T-cell (primary cell): ENCODE measurements at regions of chr18 and their contacts with region 1.

Region 1: GRCh38 chr18:42053188-42053781 is 98.3 kb downstream of the PIK3C3 start:
- DNase-seq: peak in 33 of 35 experiments; percentile 10 to 76 (median 41)
- ATAC-seq: peak; percentile 57 to 73 (median 66)
- H3K4me3 ChIP-seq: no peak overlapping the region
- H3K4me3 Mint-ChIP-seq: no peak overlapping the region
- H3K27ac ChIP-seq: no peak overlapping the region
- H3K27ac Mint-ChIP-seq: peak overlapping the region in 1 of 2 donors; percentile 52
- H3K4me1 ChIP-seq: no peaks in the 10 kb centered on the region
- H3K4me1 Mint-ChIP-seq: peaks cover 14 to 15% (median 15%) of the 10 kb centered on the region in 3 donors
- H3K27me3 ChIP-seq: no peaks in the 10 kb centered on the region
- H3K27me3 Mint-ChIP-seq: no peaks in the 10 kb centered on the region

Region 2: GRCh38 chr18:42028247-42028832 is 24.9 kb before region 1 on chr18:
- CTCF ChIA-PET with region 1: interaction called, 12 to 27 read pairs
- POLR2A ChIA-PET with region 1: no interaction called
- DNase-seq: peak in 23 of 35 experiments; percentile 1 to 50 (median 11)
- ATAC-seq: peak; percentile 48 to 60 (median 51)
- H3K4me3 ChIP-seq: no peak overlapping the region
- H3K4me3 Mint-ChIP-seq: no peak overlapping the region
- H3K27ac ChIP-seq: no peak overlapping the region
- H3K27ac Mint-ChIP-seq: no peak overlapping the region
- H3K4me1 ChIP-seq: no peaks in the 10 kb centered on the region
- H3K4me1 Mint-ChIP-seq: peaks cover 10 to 31% (median 23%) of the 10 kb centered on the region in 3 donors
- H3K27me3 ChIP-seq: no peaks in the 10 kb centered on the region
- H3K27me3 Mint-ChIP-seq: no peaks in the 10 kb centered on the region

Region 3: DNA sequence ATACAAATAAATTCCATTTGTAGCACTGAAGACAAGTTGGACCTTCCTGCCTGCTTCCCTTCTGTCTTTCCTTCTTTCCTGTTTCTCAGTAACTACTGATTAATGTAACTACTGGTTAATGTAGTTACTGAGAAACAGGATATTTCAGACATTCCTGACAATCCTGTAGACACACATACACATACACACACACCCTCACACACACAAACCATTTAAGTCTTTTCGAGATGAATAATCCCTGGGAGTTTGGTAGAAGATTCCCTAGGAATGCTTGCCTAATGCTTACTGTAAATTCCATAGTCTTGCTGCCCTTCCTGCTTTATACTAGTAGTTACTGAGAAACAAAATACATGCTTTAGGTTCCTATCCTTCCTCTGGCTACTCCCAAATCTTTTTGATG is 14.3 kb before region 1 on chr18:
- CTCF ChIA-PET with region 1: interaction called, 4 to 12 read pairs
- POLR2A ChIA-PET with region 1: no interaction called
- DNase-seq: no peak
- ATAC-seq: no peak
- H3K4me3 ChIP-seq: no peak overlapping the region
- H3K4me3 Mint-ChIP-seq: no peak overlapping the region
- H3K27ac ChIP-seq: no peak overlapping the region
- H3K27ac Mint-ChIP-seq: no peak overlapping the region
- H3K4me1 ChIP-seq: no peaks in the 10 kb centered on the region
- H3K4me1 Mint-ChIP-seq: peaks cover 0 to 5% (median 0%) of the 10 kb centered on the region in 3 donors
- H3K27me3 ChIP-seq: no peaks in the 10 kb centered on the region
- H3K27me3 Mint-ChIP-seq: no peaks in the 10 kb centered on the region

Region 4: DNA sequence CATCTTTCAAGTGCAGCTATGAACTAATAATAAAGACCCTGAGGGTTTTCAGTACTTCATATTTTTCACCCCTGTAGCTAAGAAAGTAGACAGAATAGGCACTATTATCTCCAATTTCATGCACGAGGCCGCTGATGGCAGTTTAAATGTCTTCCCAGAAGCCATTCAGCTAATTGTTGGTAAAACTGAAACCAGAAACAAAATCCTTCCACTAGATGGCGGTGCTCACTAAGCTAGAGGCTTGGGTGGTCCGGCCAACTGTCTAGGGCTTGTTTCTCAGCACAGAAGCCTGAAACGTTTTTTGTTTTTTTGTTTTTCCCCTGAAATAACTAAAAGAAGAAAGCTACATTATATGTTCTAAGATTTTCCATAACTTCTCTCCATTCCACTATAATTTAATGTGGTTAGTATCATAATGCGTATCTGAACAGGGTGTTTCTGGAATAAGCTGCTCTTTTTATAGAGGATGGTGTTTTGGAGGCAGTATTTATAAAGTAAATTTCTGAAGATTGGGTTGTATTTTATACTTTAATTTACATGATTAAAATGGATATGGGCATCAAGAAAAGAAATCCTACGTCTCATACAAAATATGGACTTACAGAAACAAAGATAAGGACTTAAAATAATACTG is 61.1 kb after region 1 on chr18:
- CTCF ChIA-PET with region 1: interaction called in 1 of 2 experiments, 21 read pairs
- POLR2A ChIA-PET with region 1: no interaction called
- DNase-seq: peak in 34 of 35 experiments; percentile 5 to 70 (median 26)
- ATAC-seq: peak in 3 of 4 experiments; percentile 60 to 73 (median 68)
- H3K4me3 ChIP-seq: no peak overlapping the region
- H3K4me3 Mint-ChIP-seq: no peak overlapping the region
- H3K27ac ChIP-seq: no peak overlapping the region
- H3K27ac Mint-ChIP-seq: peak overlapping the region in 1 of 2 donors; percentile 69
- H3K4me1 ChIP-seq: peaks cover 0 to 3% of the 10 kb centered on the region in 2 experiments
- H3K4me1 Mint-ChIP-seq: peaks cover 12 to 13% (median 12%) of the 10 kb centered on the region in 3 donors
- H3K27me3 ChIP-seq: peaks cover 0 to 2% of the 10 kb centered on the region in 2 experiments
- H3K27me3 Mint-ChIP-seq: peaks cover 0 to 4% of the 10 kb centered on the region in 2 donors

Region 5: DNA sequence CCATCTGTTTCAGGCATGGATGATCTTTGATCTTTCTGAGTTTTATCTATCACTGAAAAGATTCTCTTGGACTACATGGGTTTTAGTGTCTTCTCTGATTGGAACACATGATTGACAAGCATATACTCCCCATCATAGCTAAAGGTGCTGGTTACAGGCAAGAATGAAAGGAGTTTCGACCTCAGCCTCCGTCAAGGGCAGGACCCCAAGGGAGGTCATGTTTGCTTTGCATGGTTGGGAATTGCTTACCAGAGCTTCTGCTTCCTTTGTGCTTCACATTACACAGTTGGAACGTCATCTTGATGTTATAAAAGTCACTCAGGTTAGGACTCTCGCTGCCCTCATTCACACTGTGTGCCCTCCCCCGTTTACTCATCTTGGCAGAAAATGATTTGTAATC is 189.5 kb after region 1 on chr18:
- CTCF ChIA-PET with region 1: no interaction called
- POLR2A ChIA-PET with region 1: no interaction called
- DNase-seq: no peak
- ATAC-seq: no peak
- H3K4me3 ChIP-seq: no peak overlapping the region
- H3K4me3 Mint-ChIP-seq: no peak overlapping the region
- H3K27ac ChIP-seq: no peak overlapping the region
- H3K27ac Mint-ChIP-seq: no peak overlapping the region
- H3K4me1 ChIP-seq: no peaks in the 10 kb centered on the region
- H3K4me1 Mint-ChIP-seq: no peaks in the 10 kb centered on the region
- H3K27me3 ChIP-seq: no peaks in the 10 kb centered on the region
- H3K27me3 Mint-ChIP-seq: no peaks in the 10 kb centered on the region

Region 6: DNA sequence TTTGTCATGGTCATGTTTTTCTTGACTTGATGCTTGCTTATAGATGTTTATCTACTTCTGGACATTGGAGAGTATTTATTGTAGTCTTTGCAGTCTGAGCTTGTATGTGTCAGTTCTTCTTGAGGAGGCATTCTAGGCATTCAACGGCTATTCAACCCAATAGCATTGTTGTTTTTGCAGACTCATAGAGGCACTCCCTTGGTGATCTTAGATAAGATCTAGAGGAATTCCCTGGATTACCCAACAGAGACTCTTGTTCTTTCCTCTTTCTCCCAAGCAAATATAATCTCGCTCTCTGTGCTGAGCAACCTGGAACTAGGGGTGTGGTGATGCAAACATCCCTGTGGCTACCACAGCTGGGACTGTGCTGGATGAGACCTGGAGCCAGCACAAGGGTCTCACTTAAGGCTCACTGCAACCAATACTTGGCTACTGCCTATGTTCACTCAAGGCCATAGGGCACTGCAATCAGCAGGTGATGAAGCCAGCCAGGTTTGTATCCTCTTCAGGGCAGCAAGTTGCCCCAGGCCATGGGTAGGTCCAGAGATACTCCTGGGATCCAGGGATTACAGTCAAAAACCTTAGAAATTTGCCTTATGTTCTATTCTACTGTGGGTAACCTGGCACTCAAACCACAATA is 1183.8 kb after region 1 on chr18:
- CTCF ChIA-PET with region 1: no interaction called
- POLR2A ChIA-PET with region 1: no interaction called
- DNase-seq: no peak
- ATAC-seq: no peak
- H3K4me3 ChIP-seq: no peak overlapping the region
- H3K4me3 Mint-ChIP-seq: no peak overlapping the region
- H3K27ac ChIP-seq: no peak overlapping the region
- H3K27ac Mint-ChIP-seq: no peak overlapping the region
- H3K4me1 ChIP-seq: no peaks in the 10 kb centered on the region
- H3K4me1 Mint-ChIP-seq: no peaks in the 10 kb centered on the region
- H3K27me3 ChIP-seq: no peaks in the 10 kb centered on the region
- H3K27me3 Mint-ChIP-seq: no peaks in the 10 kb centered on the region